ENCODE measurements at regions of chr4 and their contacts with region 1.

Region 1: GRCh38 chr4:37686373-37687193 is at the start of gene RELL1:
- DNase-seq: peak; percentile 100
- H3K4me3 ChIP-seq: peak within 1 kb of the TSS; percentile 85 to 99 (median 96)
- H3K27ac ChIP-seq: peak within 1 kb of the TSS; percentile 96 to 99 (median 99)
- H3K4me1 ChIP-seq: peaks cover 18 to 47% (median 39%) of the 10 kb centered on the region in 4 donors
- H3K27me3 ChIP-seq: no peaks in the 10 kb centered on the region
- CTCF ChIP-seq: no peak
- EP300 ChIP-seq: no peak
- POLR2A ChIP-seq: no peak
- total RNA-seq, gene RELL1: 44.4 to 83.3 (median 73.6) TPM

Region 2: DNA sequence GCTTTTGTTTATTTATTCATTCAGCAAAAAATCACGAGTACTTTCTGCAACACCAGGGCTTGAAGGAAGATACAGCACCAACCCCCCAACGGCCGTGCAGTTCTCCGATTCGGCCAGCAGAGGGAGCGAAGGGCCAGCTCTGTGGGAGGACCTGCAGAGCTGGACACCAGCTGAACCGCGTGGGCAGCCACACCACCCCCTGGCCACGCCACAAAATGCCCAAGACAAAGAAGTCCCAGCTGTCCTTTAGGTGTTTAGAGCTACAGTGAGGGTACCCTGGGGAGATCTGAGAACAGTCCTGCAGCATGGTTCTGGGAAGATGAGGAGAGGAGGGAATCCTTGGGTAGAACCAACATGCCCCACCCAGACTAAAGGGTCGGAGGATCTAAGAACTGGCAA is 83.5 kb before region 1 on chr4:
- intact Hi-C with region 1: loop called (anchors 5 kb)
- DNase-seq: peak; percentile 96
- H3K4me3 ChIP-seq: no peak overlapping the region
- H3K27ac ChIP-seq: no peak overlapping the region
- H3K4me1 ChIP-seq: peaks cover 4 to 7% (median 6%) of the 10 kb centered on the region in 4 donors
- H3K27me3 ChIP-seq: no peaks in the 10 kb centered on the region
- CTCF ChIP-seq: peak; percentile 98 to 99 (median 99)
- EP300 ChIP-seq: no peak
- POLR2A ChIP-seq: no peak

Measured in esophagus muscularis mucosa (tissue), 4 donors.